PC-9 (cell line): ENCODE measurements at regions of chr7 and their contacts with region 1.

Region 1: GRCh38 chr7:73329861-73330581 is 2.1 kb downstream of the FKBP6 start:
- DNase-seq: no peak
- H3K4me3 ChIP-seq: no peak overlapping the region
- H3K27ac ChIP-seq: no peak overlapping the region
- H3K4me1 ChIP-seq: no peaks in the 10 kb centered on the region
- H3K27me3 ChIP-seq: no peaks in the 10 kb centered on the region
- CTCF ChIP-seq: no peak

Region 2: DNA sequence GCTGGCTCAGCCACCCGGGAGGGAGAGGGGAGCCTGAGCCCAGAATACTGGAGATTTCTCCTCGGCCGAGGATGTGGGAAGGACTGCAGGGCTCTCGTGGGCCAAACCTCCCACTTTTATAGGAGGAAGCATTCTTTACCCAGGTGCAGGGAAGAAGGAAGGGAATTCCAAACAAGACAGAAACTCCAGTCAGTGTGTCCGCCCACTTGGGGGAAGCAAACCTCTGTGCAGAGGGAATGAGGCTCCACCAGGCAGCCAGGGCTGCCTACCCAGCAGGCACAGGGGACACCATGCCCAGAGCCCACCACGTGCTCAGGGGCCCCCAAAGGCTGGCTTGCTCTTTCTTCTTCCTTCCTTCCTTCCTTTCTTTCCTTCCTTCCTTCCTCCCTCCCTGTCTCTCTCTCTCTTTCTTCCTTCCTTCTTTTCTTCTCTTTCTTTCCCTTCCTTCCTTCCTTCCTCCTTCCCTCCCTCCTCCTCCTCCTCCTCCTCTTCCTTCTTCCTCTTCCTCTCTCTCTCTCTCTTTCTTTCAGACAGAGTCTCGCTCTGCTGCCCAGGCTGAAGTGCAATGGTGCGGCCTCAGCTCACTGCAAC is 88.2 kb after region 1 on chr7:
- CTCF ChIA-PET with region 1: no interaction called
- POLR2A ChIA-PET with region 1: interaction called, 11 read pairs
- intact Hi-C with region 1: no loop called
- DNase-seq: no peak
- H3K4me3 ChIP-seq: no peak overlapping the region
- H3K27ac ChIP-seq: no peak overlapping the region
- H3K4me1 ChIP-seq: no peaks in the 10 kb centered on the region
- H3K27me3 ChIP-seq: no peaks in the 10 kb centered on the region
- CTCF ChIP-seq: no peak

Region 3: DNA sequence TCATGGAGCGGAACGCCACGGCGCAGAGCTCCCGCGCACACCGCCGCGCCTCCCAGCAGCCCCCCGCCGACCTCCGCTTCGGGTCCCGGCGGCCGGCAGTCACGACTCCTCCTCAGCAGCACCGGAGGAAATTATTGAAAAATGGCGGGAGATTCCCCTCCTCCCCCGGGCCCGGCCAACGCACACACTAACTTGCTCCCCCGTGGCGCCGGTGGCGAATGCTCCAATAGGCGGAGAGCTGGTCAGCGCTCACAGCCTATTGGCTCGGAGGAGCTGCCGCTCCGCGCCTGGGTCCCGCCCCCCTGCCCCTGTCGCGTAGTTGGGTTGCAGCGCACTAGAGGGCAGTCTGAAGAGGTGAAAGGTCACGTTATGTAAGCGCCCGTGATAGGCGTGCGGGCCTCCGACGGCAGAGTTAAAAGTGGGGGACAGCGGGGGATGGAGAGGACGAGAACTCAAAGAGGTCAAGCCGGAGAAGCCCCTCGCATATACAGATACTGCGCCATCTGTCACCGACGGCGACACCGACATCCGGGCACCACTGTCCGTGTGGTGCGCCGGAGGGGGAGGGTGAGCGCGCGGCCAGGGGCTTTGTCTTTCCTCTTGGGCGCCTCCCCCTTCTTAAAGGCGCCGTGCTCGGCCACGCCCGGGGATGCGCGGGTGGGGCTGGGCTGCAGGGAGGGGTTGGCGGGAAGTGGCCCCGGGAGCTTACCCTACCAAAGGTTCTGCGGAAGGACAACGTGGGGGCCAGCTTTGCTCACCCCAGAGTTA is 192.3 kb after region 1 on chr7 and contains the start of gene BAZ1B:
- CTCF ChIA-PET with region 1: no interaction called
- POLR2A ChIA-PET with region 1: no interaction called
- intact Hi-C with region 1: no loop called
- DNase-seq: peak; percentile 93 to 98
- H3K4me3 ChIP-seq: peak within 1 kb of the TSS; percentile 84
- H3K27ac ChIP-seq: peak within 1 kb of the TSS; percentile 39
- H3K4me1 ChIP-seq: peaks cover 28% of the 10 kb centered on the region
- H3K27me3 ChIP-seq: no peaks in the 10 kb centered on the region
- CTCF ChIP-seq: no peak
- total RNA-seq, gene BAZ1B: 73.6 and 88.4 TPM in 2 replicates